Sciatic nerve (tissue), 2 donors: ENCODE measurements at regions of chr7 and their contacts with region 1.

Region 1: GRCh38 chr7:1225441-1226185 is 7.1 kb upstream of the UNCX start:
- DNase-seq: no peak
- ATAC-seq: peak; percentile 58

Region 2: DNA sequence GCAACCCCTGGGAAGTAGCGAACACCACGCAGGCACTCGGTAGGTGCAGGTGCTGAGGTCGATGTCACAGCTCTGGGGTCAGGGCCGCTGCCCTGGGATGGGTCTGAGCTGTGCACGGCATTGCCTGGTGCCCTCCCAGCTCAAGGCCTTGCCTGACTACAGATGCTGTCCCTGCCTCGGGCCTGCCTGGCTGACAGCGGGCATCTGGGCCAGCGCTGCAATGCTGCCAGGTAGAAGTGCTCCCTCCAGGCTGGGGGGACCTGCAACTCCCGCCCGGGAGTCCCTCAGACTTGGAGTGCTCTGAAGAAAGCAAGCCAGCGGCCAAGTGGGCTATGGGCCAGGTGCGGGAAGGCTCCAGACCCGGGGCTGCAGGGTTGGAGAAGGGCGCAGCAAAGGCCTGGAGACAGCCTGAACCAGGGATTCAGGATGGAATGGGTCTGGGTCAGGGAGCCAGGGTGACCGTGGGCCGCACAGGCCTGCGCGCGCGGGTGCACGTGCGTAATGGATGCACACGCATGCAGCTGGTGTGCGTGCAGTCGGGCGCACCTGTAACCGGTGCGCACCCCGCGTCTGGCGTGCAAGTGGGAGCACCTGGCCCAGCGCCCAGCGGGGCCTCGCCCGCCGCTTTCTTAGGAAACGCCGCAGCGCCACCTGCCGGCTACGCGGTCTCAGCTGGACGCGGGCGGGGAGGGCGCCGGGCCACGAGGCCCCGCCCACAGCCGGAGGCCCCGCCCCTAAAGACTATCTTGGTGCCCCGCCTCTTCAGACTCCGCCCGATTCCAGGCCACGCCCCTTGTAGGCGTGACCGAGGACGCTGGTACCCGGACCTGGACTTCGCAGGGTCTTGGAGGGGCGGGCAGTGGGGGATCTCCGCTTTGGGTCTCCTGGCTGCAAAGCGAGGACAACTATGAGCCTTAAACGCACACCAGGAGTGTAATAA is 187.0 kb after region 1 on chr7:
- intact Hi-C with region 1: loop called (anchors 5 kb)
- DNase-seq: peak; percentile 91
- ATAC-seq: peak; percentile 94

Region 3: DNA sequence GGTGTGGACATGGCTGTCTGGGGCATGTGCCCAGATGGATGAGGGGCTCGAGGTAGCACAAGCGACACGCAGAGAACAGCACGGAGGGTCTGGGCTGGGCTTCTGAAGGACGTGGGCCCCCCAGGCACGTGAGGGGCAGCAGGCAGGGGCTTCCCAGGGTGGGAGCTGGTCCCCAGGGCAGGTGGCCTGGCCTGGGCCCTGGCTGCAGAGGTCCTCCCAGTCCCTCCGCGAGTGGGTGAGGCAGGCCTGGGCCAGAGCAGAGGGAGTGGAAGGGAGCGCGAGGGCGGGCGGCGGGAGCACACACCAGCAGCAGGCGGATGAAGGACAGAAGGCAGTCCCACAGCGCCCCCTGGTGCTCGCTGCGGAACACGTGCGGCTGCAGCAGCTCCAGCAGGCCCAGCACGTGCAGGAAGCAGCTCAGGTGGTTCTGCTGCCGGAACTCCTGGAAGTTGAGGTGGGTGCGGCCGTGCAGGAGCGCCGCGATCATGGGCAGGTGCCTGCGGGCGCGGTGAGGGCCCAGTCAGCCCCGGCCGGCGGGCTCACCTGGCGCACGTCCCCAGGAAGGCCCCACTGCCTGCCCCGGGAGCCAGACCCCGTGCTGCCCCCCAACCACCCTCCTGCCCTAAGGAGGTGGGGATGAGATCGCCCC is 248.4 kb after region 1 on chr7:
- intact Hi-C with region 1: loop called (anchors 10 kb)
- DNase-seq: peak; percentile 94
- ATAC-seq: peak; percentile 77